A673 (cell line): ENCODE measurements at regions of chr5 and their contacts with region 1.

Region 1: GRCh38 chr5:68252673-68253623 is 37.4 kb downstream of the PIK3R1 start:
- DNase-seq: peak; percentile 86
- H3K4me3 ChIP-seq: peak overlapping the region; percentile 7
- H3K27ac ChIP-seq: peak overlapping the region; percentile 77
- H3K4me1 ChIP-seq: peaks cover 96% of the 10 kb centered on the region
- H3K27me3 ChIP-seq: no peaks in the 10 kb centered on the region
- CTCF ChIP-seq: peak; percentile 86

Region 2: DNA sequence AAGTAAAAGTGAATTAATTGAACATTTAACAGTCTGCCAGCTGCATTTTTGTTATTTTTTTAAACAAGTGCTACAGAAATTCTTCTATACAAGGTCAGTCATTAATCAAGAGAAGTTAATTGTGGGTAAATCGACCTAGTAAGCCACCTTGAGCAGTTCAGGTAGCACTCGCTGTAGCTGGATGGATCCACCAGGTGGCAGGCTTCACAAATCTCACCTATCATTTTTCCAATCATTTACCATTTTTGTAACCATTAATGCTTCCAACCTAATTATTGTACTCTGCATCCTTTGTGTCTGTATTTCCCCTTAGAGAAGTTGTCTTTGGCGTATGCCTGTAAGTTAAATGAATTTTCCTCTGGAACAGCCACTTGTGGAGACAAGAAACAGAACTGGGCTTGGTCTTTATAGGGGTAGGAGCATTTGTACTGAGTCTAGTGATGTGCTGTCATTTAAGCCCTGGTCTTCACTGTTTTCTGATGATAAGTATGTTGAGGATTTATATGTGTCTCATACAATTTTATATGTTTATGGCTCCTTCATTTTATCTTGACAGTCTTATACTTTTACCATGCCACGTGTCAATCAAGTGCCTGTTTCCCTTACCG is 1095.9 kb before region 1 on chr5:
- CTCF ChIA-PET with region 1: no interaction called
- POLR2A ChIA-PET with region 1: no interaction called
- intact Hi-C with region 1: loop called (anchors 10 kb)
- DNase-seq: peak; percentile 56
- H3K4me3 ChIP-seq: no peak overlapping the region
- H3K27ac ChIP-seq: no peak overlapping the region
- H3K4me1 ChIP-seq: peaks cover 29% of the 10 kb centered on the region
- H3K27me3 ChIP-seq: no peaks in the 10 kb centered on the region
- CTCF ChIP-seq: peak; percentile 87

Region 3: DNA sequence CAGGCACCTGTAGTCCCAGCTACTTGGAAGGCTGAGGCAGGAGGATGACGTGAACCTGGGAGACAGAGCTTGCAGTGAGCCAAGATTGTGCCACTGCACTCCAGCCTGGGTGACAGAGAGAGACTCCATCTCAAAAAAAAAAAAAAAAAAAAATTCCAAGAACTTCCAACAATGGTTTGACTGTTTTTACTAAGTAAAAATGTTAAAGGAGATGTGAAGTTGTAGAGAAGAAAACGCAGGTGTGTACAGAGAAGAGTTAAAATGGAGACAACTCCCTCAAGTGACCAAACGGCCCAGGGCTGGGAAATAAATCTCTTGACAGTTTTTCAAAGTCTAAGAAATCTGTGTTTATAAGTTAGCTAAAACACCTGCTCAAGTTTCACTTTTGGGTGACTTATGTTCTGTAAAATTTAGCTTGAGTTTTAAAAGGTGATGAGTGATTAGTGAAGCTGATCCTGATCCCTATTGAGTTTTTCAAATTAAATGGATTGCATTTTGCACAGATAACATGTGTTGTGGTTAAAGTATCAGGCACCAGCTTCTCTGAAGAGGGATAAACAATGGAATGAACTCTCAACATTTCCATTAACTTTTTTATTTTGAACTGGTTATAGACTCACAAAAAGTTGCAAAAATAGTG is 801.2 kb before region 1 on chr5:
- CTCF ChIA-PET with region 1: no interaction called
- POLR2A ChIA-PET with region 1: no interaction called
- intact Hi-C with region 1: loop called (anchors 1 kb)
- DNase-seq: no peak
- H3K4me3 ChIP-seq: no peak overlapping the region
- H3K27ac ChIP-seq: peak overlapping the region; percentile 64
- H3K4me1 ChIP-seq: peaks cover 52% of the 10 kb centered on the region
- H3K27me3 ChIP-seq: no peaks in the 10 kb centered on the region
- CTCF ChIP-seq: no peak

Region 4: DNA sequence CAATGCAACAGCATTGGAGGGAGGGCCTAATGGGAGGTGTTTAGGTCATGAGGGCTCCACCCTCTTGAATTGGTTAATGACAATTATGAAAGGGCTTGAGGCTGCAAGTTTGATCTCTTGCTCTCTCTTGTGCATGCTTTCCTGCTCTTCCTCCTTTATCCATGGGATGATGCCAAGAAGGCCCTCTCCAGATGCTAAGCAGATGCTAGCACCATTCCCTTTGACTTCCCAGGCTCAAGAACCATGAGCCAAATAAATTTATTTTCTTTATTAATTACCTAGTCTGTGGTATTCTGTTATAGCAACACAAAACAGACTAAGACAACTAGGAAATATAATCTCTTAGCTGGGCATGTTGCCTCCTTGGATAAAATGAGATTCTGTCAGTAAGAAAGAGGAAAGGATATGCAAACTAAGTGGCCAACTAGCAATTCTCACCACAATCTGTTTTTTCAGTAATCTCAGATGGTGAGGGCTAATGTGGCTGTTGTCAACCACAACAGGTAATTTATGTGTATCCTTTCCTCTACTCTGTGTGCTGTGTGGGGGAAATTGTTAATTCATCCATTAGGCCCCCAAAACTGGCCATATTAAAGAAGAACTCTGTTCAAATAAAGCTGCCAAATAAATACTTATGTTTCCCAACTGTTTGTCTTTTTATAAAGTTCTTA is 787.3 kb before region 1 on chr5:
- CTCF ChIA-PET with region 1: no interaction called
- POLR2A ChIA-PET with region 1: interaction called, 12 read pairs
- intact Hi-C with region 1: no loop called
- DNase-seq: no peak
- H3K4me3 ChIP-seq: no peak overlapping the region
- H3K27ac ChIP-seq: no peak overlapping the region
- H3K4me1 ChIP-seq: no peaks in the 10 kb centered on the region
- H3K27me3 ChIP-seq: no peaks in the 10 kb centered on the region
- CTCF ChIP-seq: no peak

Region 5: DNA sequence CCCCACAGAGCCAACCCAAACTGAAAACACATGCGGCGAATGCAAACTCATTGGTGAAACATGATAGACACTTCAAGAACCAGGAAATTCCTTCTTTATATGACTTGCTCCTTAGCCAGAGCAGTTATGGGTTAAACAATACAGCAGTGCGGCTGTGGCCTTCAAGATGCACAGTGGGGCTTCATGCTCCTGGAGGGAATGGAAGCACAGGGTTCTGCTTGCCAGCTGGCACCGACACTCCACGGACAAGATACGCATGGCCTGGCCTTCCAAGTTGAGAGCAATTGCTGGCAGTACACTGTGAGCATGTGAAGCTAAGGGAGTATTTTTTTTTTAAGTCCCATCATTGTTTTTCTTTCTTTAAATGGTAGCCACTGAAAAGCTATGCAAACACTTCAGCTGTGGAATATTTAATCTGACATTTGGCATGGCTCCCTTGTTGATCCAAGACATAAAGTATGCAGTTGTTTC is 604.7 kb before region 1 on chr5:
- CTCF ChIA-PET with region 1: no interaction called
- POLR2A ChIA-PET with region 1: no interaction called
- intact Hi-C with region 1: loop called (anchors 10 kb)
- DNase-seq: peak; percentile 91
- H3K4me3 ChIP-seq: no peak overlapping the region
- H3K27ac ChIP-seq: no peak overlapping the region
- H3K4me1 ChIP-seq: peaks cover 30% of the 10 kb centered on the region
- H3K27me3 ChIP-seq: no peaks in the 10 kb centered on the region
- CTCF ChIP-seq: no peak

Region 6: GRCh38 chr5:68319316-68320093 is 66.6 kb after region 1 on chr5:
- CTCF ChIA-PET with region 1: no interaction called
- POLR2A ChIA-PET with region 1: no interaction called
- intact Hi-C with region 1: no loop called
- DNase-seq: no peak
- H3K4me3 ChIP-seq: no peak overlapping the region
- H3K27ac ChIP-seq: no peak overlapping the region
- H3K4me1 ChIP-seq: no peaks in the 10 kb centered on the region
- H3K27me3 ChIP-seq: no peaks in the 10 kb centered on the region
- CTCF ChIP-seq: no peak